ENCODE measurements at regions of chr9 and their contacts with region 1.

Region 1: GRCh38 chr9:110900917-110901316 is 137.4 kb downstream of the LPAR1 start:
- DNase-seq: no peak
- ATAC-seq: no peak
- H3K4me3 ChIP-seq: no peak overlapping the region
- H3K27ac ChIP-seq: no peak overlapping the region
- H3K4me1 ChIP-seq: no peaks in the 10 kb centered on the region
- H3K27me3 ChIP-seq: no peaks in the 10 kb centered on the region
- CTCF ChIP-seq: no peak
- POLR2A ChIP-seq: no peak

Region 2: DNA sequence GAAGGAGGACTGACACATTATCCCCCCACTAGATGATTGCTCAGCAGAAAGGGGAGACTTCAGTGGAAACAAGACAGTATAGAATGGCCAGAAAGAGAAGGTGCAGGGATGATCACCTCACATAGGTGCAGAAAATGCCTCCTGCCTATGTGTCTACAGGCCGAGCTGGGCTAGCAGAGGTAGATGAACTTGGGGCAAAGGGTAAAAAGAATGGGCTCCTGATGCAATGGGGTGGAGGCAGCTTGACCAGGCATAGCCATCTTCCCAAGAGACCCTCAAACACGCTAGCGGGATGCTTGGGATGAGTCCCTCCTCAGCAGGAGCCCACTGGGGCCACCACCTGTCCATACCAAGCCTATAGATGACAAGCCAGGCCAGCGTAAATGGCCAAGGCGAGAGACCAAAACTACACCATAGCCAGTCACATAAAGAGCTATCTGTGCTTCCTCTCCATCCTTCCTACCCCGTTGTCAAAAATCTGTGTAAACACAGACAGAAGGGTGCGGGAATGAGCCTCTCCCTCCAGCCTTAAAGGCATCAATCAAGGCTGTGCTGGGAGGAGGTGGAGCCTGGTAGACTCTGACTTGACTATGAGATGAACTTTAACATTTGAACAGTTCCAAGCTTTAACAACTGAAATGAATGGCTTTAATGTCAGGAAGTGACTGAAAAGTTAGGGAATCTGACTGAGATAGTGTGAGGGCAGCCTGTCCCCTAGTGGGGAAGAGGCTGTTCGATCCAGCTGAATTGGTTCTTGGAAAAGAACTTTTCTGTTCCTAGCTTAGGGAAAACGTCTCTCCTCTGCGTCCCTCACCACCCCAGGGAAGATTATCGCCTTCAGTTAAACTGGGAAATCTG is 703.4 kb before region 1 on chr9:
- in situ Hi-C with region 1: no loop called
- intact Hi-C with region 1: no loop called
- DNase-seq: no peak
- ATAC-seq: no peak
- H3K4me3 ChIP-seq: no peak overlapping the region
- H3K27ac ChIP-seq: no peak overlapping the region
- H3K4me1 ChIP-seq: no peaks in the 10 kb centered on the region
- H3K27me3 ChIP-seq: no peaks in the 10 kb centered on the region
- CTCF ChIP-seq: peak in 1 of 5 experiments; percentile 18
- POLR2A ChIP-seq: no peak

Region 3: GRCh38 chr9:110623462-110624025 is 277.4 kb before region 1 on chr9:
- in situ Hi-C with region 1: no loop called
- intact Hi-C with region 1: no loop called
- DNase-seq: no peak
- ATAC-seq: peak; percentile 47 to 49
- H3K4me3 ChIP-seq: no peak overlapping the region
- H3K27ac ChIP-seq: no peak overlapping the region
- H3K4me1 ChIP-seq: no peaks in the 10 kb centered on the region
- H3K27me3 ChIP-seq: no peaks in the 10 kb centered on the region
- CTCF ChIP-seq: peak; percentile 23 to 62 (median 50)
- POLR2A ChIP-seq: no peak

Region 4: DNA sequence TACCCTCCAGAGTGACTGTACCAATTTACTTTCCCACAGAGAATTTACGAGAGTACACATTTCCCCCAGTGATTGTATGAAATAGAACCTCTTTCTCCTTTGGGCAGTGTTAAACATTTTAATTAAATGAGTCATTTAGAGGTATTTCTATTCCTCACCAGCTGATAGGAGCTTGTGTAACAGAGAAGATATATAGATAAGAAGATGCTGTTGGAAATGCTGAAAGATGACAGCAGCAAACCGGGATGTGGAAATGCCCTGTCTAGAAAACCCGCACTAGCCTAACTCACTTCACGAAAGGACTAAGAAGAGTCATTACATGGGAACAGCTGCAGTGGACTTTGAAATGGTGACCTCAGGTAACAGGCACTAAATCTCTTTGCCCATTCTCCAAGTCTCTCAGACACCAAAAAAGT is 69.1 kb after region 1 on chr9:
- in situ Hi-C with region 1: loop called in 1 of 4 experiments (anchors 10 kb)
- intact Hi-C with region 1: no loop called
- DNase-seq: no peak
- ATAC-seq: no peak
- H3K4me3 ChIP-seq: no peak overlapping the region
- H3K27ac ChIP-seq: no peak overlapping the region
- H3K4me1 ChIP-seq: no peaks in the 10 kb centered on the region
- H3K27me3 ChIP-seq: no peaks in the 10 kb centered on the region
- CTCF ChIP-seq: no peak
- POLR2A ChIP-seq: no peak

Measured in gastrocnemius medialis (tissue), 4 donors.